Naive thymus-derived CD4-positive, alpha-beta T cell (primary cell): ENCODE measurements at regions of chr16 and their contacts with region 1.

Region 1: GRCh38 chr16:27109666-27110523 is 43.2 kb downstream of the C16orf82 start:
- DNase-seq: peak; percentile 55 to 93 (median 80)
- ATAC-seq: peak; percentile 94
- H3K4me3 ChIP-seq: peak overlapping the region; percentile 54
- H3K4me3 Mint-ChIP-seq: peak overlapping the region; percentile 54 to 84 (median 70)
- H3K27ac ChIP-seq: no peak overlapping the region
- H3K27ac Mint-ChIP-seq: peak overlapping the region in 3 of 9 donors; percentile 12 to 25 (median 20)
- H3K4me1 ChIP-seq: peaks cover 6 to 9% of the 10 kb centered on the region in 2 donors
- H3K4me1 Mint-ChIP-seq: peaks cover 0 to 13% (median 6%) of the 10 kb centered on the region in 7 donors
- H3K27me3 ChIP-seq: no peaks in the 10 kb centered on the region
- H3K27me3 Mint-ChIP-seq: peaks cover 0 to 5% (median 0%) of the 10 kb centered on the region in 5 donors

Region 2: GRCh38 chr16:25279491-25279890 is 1830.4 kb before region 1 on chr16:
- CTCF ChIA-PET with region 1: no interaction called
- POLR2A ChIA-PET with region 1: no interaction called
- intact Hi-C with region 1: loop called in 1 of 2 experiments (anchors 2 kb)
- DNase-seq: no peak
- ATAC-seq: no peak
- H3K4me3 ChIP-seq: no peak overlapping the region
- H3K4me3 Mint-ChIP-seq: no peak overlapping the region
- H3K27ac ChIP-seq: no peak overlapping the region
- H3K27ac Mint-ChIP-seq: no peak overlapping the region
- H3K4me1 ChIP-seq: no peaks in the 10 kb centered on the region
- H3K4me1 Mint-ChIP-seq: peaks cover 0 to 9% (median 3%) of the 10 kb centered on the region in 7 donors
- H3K27me3 ChIP-seq: no peaks in the 10 kb centered on the region
- H3K27me3 Mint-ChIP-seq: peaks cover 0 to 8% (median 0%) of the 10 kb centered on the region in 5 donors

Region 3: GRCh38 chr16:25838724-25839186 is 1271.1 kb before region 1 on chr16:
- CTCF ChIA-PET with region 1: interaction called, 4 read pairs
- POLR2A ChIA-PET with region 1: no interaction called
- intact Hi-C with region 1: loop called in 1 of 2 experiments (anchors 2 kb)
- DNase-seq: peak in 8 of 9 donors; percentile 13 to 59 (median 38)
- ATAC-seq: peak; percentile 54
- H3K4me3 ChIP-seq: no peak overlapping the region
- H3K4me3 Mint-ChIP-seq: peak overlapping the region in 1 of 10 donors; percentile 8
- H3K27ac ChIP-seq: no peak overlapping the region
- H3K27ac Mint-ChIP-seq: no peak overlapping the region
- H3K4me1 ChIP-seq: no peaks in the 10 kb centered on the region
- H3K4me1 Mint-ChIP-seq: peaks cover 0 to 5% (median 0%) of the 10 kb centered on the region in 7 donors
- H3K27me3 ChIP-seq: no peaks in the 10 kb centered on the region
- H3K27me3 Mint-ChIP-seq: peaks cover 8 to 22% (median 15%) of the 10 kb centered on the region in 5 donors

Region 4: DNA sequence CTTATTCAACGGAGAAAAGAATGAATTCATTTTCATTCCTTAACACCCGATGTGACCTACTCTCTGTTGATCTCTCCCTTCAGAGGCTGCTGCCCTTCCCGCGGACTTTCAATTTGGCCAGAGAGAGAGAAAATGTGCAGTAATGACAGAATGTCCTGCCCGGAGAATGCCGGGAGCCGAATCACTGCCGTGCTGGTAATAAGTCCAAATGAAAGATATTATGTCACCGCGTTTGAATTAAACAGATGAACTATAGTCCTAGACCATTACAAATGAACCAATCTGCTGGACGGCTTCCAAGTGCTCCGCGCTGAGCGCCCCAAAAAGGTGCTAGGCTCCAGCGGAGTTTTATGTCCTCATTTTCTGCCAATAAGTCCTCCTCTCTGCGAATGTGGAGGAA is 57.9 kb before region 1 on chr16:
- CTCF ChIA-PET with region 1: no interaction called
- POLR2A ChIA-PET with region 1: no interaction called
- intact Hi-C with region 1: no loop called
- DNase-seq: no peak
- ATAC-seq: no peak
- H3K4me3 ChIP-seq: no peak overlapping the region
- H3K4me3 Mint-ChIP-seq: no peak overlapping the region
- H3K27ac ChIP-seq: no peak overlapping the region
- H3K27ac Mint-ChIP-seq: no peak overlapping the region
- H3K4me1 ChIP-seq: no peaks in the 10 kb centered on the region
- H3K4me1 Mint-ChIP-seq: no peaks in the 10 kb centered on the region
- H3K27me3 ChIP-seq: no peaks in the 10 kb centered on the region
- H3K27me3 Mint-ChIP-seq: no peaks in the 10 kb centered on the region

Region 5: DNA sequence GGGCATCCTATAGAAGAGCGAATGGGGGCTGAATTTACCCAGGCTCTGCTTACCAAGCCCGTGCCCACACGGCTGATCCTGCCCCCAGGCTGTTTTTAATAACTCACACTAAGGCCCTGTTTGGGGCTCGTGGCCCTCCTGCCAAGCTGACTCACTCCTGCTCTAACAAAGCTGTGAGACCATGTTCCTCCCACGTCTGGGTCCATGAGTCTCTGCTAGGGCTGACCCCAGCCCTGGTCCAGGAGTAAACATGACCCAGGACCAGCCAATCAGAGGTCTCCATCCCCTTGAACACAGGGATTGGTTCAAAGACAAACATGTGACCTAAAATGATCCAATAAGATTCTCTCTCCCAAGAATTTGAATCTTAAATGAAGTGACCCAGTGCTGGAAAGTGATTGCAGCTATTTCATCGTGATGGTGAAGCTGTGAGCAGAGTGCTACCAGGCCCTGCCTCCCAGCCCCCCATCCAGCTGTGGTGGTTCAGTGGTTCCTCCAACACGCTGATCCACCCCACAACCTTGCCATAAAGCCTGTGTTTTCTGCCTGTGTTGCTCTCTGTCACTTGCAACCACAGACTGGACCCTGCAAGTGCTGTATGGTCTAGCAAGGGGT is 14.0 kb after region 1 on chr16:
- CTCF ChIA-PET with region 1: no interaction called
- POLR2A ChIA-PET with region 1: no interaction called
- intact Hi-C with region 1: no loop called
- DNase-seq: no peak
- ATAC-seq: no peak
- H3K4me3 ChIP-seq: no peak overlapping the region
- H3K4me3 Mint-ChIP-seq: no peak overlapping the region
- H3K27ac ChIP-seq: no peak overlapping the region
- H3K27ac Mint-ChIP-seq: no peak overlapping the region
- H3K4me1 ChIP-seq: no peaks in the 10 kb centered on the region
- H3K4me1 Mint-ChIP-seq: no peaks in the 10 kb centered on the region
- H3K27me3 ChIP-seq: peaks cover 0 to 2% of the 10 kb centered on the region in 2 donors
- H3K27me3 Mint-ChIP-seq: peaks cover 0 to 12% (median 0%) of the 10 kb centered on the region in 5 donors

Region 6: GRCh38 chr16:27455700-27456099 is 345.8 kb after region 1 on chr16:
- CTCF ChIA-PET with region 1: no interaction called
- POLR2A ChIA-PET with region 1: interaction called, 3 read pairs
- intact Hi-C with region 1: loop called in 1 of 2 experiments (anchors 2 kb)
- DNase-seq: peak in 6 of 9 donors; percentile 22 to 47 (median 32)
- ATAC-seq: peak; percentile 18
- H3K4me3 ChIP-seq: no peak overlapping the region
- H3K4me3 Mint-ChIP-seq: peak overlapping the region in 9 of 10 donors; percentile 3 to 75 (median 23)
- H3K27ac ChIP-seq: no peak overlapping the region
- H3K27ac Mint-ChIP-seq: peak overlapping the region; percentile 54 to 87 (median 79)
- H3K4me1 ChIP-seq: peaks cover 24 to 46% of the 10 kb centered on the region in 2 donors
- H3K4me1 Mint-ChIP-seq: peaks cover 30 to 75% (median 51%) of the 10 kb centered on the region in 7 donors
- H3K27me3 ChIP-seq: no peaks in the 10 kb centered on the region
- H3K27me3 Mint-ChIP-seq: no peaks in the 10 kb centered on the region